HCT116 (cell line): ENCODE measurements at regions of chr1 and their contacts with region 1.

Region 1: DNA sequence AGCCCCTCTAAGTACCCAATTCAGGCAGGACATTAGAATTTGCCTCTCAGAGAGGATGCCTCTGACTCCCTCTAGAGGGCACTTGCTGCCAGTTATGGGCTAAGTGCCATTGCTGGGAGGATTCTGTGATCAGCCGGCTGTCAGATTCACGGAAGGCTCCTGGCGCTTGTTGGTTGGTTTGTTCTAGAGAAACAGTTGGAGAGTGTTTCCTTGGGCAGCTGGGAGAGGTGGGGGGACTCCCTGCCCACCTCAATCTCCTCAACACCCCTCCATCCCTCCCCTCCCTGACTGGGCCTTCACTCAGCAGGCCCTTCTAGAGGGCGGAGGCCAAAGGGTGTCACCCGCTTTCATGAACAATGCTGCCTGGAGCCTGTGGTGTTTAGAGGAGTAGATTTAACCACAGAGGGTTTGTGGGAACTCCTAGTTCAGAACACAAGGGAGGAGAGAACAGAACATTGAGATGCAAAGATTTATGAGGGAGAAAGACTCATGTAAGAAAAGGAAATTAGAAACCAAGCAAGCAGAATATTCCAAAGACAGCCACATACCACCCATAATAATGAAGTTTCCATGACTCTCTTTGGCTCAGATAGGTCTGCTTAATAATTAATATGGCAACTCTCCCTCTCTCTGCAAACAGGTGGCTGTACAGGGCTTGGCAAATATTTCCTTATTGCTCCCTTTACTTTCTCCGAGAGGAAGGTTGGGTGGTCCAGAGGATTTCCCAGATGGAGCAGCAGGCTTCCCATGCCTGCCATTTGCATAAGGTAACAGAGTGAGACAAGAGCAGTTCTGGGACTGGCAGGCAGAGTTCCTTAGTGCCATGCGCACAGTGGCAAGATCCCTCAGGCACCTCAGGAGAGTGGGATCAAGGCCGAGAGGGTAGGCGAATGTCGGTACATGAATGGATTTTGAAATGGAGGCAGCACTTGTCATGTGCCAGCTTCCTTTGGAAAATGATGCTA is 30.0 kb upstream of the ACP6 start:
- DNase-seq: peak; percentile 36
- ATAC-seq: peak; percentile 95
- H3K4me3 ChIP-seq: no peak overlapping the region
- H3K27ac ChIP-seq: no peak overlapping the region
- H3K4me1 ChIP-seq: peaks cover 0 to 4% of the 10 kb centered on the region in 2 experiments; a peak in 2 of 4 replicates
- H3K27me3 ChIP-seq: no peaks in the 10 kb centered on the region
- CTCF ChIP-seq: peak; percentile 67 to 98 (median 90); a peak in 5 of 6 replicates
- POLR2A ChIP-seq: no peak
- RAD21 ChIP-seq: peak; percentile 75

Region 2: DNA sequence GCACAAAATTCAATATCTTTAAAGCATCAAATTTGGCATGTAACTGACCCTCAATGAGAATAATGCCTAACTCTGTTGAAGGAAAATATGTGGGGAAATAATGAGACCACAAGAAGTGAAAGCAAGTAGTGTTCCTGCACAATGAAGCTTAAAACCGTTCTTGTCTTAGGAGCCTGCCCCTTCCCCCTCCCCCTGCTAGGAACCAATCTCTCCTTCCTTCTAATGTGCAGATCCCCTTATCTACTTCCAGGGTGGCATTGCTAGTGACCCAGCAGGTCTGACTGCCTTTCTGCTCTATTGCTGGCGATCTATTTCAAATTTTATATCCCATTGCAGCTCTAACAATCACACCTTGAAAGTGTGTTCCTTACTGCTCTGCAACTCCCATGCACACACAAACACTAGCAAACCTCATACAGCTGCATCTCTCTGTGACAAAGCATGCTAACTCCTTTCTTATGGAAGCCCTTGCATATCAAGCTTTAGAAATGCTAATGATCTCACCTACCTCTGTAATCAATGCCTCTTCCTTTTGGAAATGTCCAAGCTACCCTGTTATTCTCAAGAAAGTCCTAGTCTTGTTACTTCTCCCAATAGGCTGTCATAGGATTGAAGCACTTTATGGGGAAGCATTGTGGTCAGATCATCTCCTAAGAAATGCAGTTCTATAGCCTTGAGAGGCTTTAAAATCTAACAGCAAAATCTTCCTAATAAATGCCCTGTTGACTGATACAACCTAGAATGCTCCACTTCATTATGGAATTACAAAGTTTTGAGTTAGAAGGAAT is 132.5 kb before region 1 on chr1:
- CTCF ChIA-PET with region 1: no interaction called
- POLR2A ChIA-PET with region 1: no interaction called
- RAD21 ChIA-PET with region 1: no interaction called
- intact Hi-C with region 1: no loop called
- DNase-seq: no peak
- ATAC-seq: no peak
- H3K4me3 ChIP-seq: no peak overlapping the region
- H3K27ac ChIP-seq: no peak overlapping the region
- H3K4me1 ChIP-seq: no peaks in the 10 kb centered on the region
- H3K27me3 ChIP-seq: no peaks in the 10 kb centered on the region; the same call in 1 of the 2 replicates
- CTCF ChIP-seq: no peak
- POLR2A ChIP-seq: no peak
- RAD21 ChIP-seq: no peak

Region 3: DNA sequence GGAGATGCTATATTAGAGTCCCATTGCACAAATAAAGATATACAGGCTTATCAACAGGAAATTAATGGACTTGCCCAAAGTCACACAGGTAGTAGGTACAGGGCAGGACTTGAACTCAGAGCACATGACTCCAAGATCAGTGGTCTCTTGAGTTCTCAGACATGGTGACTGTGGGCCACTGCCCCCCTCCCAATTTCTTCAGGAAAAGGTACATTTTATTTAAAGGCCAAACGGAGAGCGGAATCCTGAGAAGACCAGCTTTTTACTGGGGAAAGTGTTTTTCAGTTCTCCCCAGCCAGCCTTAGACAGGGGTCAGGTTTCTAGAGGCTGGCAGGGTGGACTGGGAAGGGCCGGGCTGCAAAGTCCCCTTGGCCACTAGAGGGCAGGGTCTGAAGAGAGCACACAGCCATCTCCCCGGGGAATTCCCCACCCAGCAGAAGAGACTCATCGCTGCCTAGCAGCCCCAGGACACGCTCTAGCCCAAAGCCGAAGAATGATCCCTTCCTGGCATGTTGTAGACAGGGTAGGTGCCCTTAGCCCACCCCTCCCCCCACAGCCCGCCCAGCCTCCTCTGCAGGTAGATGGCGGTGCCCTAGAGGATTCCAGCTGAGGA is 59.7 kb before region 1 on chr1:
- CTCF ChIA-PET with region 1: no interaction called
- POLR2A ChIA-PET with region 1: no interaction called
- RAD21 ChIA-PET with region 1: no interaction called
- intact Hi-C with region 1: loop called (anchors 5 kb)
- DNase-seq: peak; percentile 44
- ATAC-seq: peak; percentile 99
- H3K4me3 ChIP-seq: no peak overlapping the region
- H3K27ac ChIP-seq: no peak overlapping the region
- H3K4me1 ChIP-seq: peaks cover 0 to 11% of the 10 kb centered on the region in 2 experiments; a peak in 1 of 4 replicates
- H3K27me3 ChIP-seq: no peaks in the 10 kb centered on the region
- CTCF ChIP-seq: peak; percentile 58 to 96 (median 84)
- POLR2A ChIP-seq: no peak
- RAD21 ChIP-seq: peak; percentile 50; the same call in 1 of the 2 replicates